OCI-LY7 (cell line): ENCODE measurements at regions of chr1 and their contacts with region 1.

Region 1: DNA sequence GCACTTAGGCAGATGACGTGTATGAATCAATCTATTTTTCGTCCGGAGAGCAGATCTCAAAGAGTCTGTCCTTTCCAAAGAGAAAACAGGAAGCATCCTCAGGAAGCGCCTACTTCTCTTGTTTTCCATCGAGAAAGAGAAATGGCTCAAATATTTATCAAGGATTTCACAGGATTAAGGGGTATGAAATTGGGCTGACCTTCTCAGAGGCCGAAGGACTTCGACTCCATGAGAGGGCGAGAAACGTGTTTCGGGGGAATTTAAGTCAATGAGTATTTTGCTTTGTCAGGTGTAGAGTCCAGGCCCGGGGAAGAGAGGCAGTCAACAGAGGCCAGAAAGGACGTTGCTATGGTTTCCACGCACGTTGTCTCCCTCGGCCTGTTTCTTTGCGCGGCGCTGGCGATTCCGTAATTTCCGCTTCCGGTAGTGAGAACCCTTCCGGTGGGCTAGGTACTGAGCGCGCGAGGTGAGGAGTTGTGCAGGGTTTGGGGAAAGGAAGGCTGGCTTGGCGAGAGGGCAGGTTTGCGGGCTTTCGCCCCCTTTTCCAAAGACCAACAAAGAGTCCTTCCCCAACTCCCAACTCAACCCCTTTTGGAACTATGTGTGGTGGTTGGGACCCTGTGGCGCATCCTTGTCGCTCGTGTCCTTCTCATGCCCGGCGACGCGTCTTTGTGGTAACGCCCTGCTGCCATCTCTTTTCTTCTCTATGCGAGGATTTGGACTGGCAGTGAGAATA is at the start of gene MRPS21:
- DNase-seq: peak; percentile 92
- H3K4me3 ChIP-seq: peak within 1 kb of the TSS; percentile 97
- H3K27ac ChIP-seq: peak within 1 kb of the TSS; percentile 43
- H3K4me1 ChIP-seq: peaks cover 21% of the 10 kb centered on the region
- CTCF ChIP-seq: no peak
- total RNA-seq, gene MRPS21: 64.8 and 80.0 TPM in 2 replicates

Region 2: GRCh38 chr1:150249936-150250335 is 43.7 kb before region 1 on chr1:
- CTCF ChIA-PET with region 1: no interaction called
- POLR2A ChIA-PET with region 1: no interaction called
- intact Hi-C with region 1: loop called (anchors 5 kb)
- DNase-seq: no peak
- H3K4me3 ChIP-seq: no peak overlapping the region
- H3K27ac ChIP-seq: no peak overlapping the region
- H3K4me1 ChIP-seq: no peaks in the 10 kb centered on the region
- CTCF ChIP-seq: no peak

Region 3: DNA sequence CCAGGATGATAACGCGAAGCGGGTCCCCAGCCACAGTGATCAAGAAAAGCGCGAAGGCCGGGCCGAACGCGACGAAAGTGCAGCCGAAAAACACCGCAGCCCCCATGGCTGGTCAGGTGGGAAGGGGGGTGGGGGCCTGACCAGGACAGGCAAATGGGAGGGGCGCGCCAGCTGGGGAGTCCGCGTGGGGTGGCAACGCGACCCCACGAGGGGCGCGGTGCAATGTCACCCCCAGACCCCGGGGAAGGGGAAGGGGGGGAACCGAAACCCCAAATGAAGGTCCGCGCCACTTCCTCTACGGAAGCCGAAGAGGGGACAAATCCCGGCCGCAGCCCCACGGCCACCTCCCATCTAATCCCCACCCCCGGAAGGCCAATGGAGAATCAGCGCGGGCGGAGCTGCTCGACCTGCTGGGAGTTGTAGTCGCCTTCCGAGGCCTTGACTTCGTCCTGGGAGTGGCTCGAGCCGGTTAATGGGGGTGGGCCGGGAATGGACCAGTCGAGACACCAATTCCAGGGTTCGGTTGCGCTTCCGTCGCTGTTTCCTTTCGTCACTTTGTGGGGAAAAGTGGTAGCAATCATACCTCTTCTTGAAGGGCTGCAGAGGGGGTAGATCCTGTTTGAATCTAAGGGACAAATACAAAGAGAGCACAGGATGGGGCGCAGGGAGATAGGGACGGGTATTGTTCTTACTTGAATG is 24.7 kb before region 1 on chr1 and contains the start of gene APH1A:
- CTCF ChIA-PET with region 1: no interaction called
- POLR2A ChIA-PET with region 1: no interaction called
- intact Hi-C with region 1: loop called (anchors 1 kb)
- DNase-seq: peak; percentile 96
- H3K4me3 ChIP-seq: peak within 1 kb of the TSS; percentile 82
- H3K27ac ChIP-seq: peak within 1 kb of the TSS; percentile 52
- H3K4me1 ChIP-seq: peaks cover 19% of the 10 kb centered on the region
- CTCF ChIP-seq: no peak
- total RNA-seq, gene APH1A: 83.3 and 113 TPM in 2 replicates

Region 4: GRCh38 chr1:150309770-150310508 is 16.3 kb after region 1 on chr1:
- CTCF ChIA-PET with region 1: no interaction called
- POLR2A ChIA-PET with region 1: no interaction called
- intact Hi-C with region 1: no loop called
- DNase-seq: no peak
- H3K4me3 ChIP-seq: no peak overlapping the region
- H3K27ac ChIP-seq: no peak overlapping the region
- H3K4me1 ChIP-seq: no peaks in the 10 kb centered on the region
- CTCF ChIP-seq: no peak